Activated naive CD4-positive, alpha-beta T cell treated with anti-CD3 and anti-CD28 coated beads for 36 hours (primary cell): ENCODE measurements at regions of chr21 and their contacts with region 1.

Region 1: DNA sequence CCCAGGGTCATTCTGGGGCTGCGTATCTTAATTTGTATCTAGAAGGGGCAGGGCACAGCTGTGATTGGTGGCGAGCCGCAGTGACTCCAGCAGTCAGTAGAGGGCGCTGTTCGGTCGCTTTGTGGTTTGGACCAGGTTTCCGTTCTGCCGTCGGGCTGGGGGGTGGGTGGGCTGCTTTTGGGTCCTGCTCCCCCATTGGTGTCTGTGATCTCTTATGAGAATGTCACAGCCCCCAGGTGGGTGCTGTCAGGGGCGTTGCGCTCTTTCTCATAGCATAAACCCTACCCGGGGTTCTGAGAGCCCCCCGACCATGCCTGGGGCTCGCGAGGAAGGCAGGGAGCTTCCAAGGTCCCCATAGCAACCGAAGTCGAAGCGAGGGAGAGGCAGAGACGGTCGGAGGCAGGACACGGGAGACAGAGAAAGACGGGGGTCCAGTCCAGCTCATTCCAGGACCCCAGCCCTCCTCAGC is 5.4 kb downstream of the TFF3 start:
- DNase-seq: peak; percentile 86
- H3K4me3 Mint-ChIP-seq: no peak overlapping the region
- H3K27ac Mint-ChIP-seq: no peak overlapping the region
- H3K4me1 Mint-ChIP-seq: peaks cover 3% of the 10 kb centered on the region
- H3K27me3 Mint-ChIP-seq: peaks cover 2% of the 10 kb centered on the region

Region 2: DNA sequence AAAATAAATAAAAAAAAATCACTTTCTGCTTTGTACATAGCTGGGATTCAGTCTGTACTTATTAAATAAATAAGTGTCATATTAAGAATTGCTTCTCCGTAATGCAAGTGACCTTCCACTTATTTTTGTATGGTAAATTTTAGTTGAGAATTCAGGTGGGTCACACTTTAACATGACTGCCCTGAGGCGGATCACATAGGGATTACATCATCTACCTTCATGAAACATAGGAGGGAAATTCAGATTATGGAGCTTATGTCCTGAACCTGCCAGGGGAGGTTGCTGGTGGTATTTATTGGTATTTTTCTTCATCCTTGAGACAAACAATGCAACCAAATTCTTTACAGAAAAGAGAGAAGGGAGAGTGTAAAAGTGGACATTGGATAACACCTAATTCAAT is 1527.0 kb before region 1 on chr21:
- CTCF ChIA-PET with region 1: no interaction called
- intact Hi-C with region 1: no loop called
- DNase-seq: no peak
- H3K4me3 Mint-ChIP-seq: no peak overlapping the region
- H3K27ac Mint-ChIP-seq: no peak overlapping the region
- H3K4me1 Mint-ChIP-seq: no peaks in the 10 kb centered on the region
- H3K27me3 Mint-ChIP-seq: peaks cover 2% of the 10 kb centered on the region

Region 3: DNA sequence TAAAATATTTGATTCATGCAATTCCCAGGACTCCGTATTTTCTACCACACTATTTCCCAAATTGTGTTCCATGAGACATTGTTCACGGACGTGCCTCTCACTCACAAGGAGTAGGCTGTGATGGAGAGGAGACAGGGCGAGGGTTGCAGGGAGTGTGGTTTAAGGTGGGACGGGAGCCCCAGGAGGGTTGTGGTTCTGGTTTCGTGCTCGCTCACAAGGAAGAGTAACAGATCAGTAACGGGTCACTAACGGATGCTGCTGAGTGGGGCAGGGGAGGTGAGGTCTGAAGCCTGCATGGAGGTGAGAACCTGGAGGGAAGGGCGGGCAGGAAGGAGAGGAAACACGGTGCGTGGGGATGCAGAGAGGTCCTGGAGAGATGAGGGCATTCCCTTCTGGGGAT is 23.4 kb before region 1 on chr21:
- CTCF ChIA-PET with region 1: no interaction called
- intact Hi-C with region 1: no loop called
- DNase-seq: no peak
- H3K4me3 Mint-ChIP-seq: no peak overlapping the region
- H3K27ac Mint-ChIP-seq: no peak overlapping the region
- H3K4me1 Mint-ChIP-seq: no peaks in the 10 kb centered on the region
- H3K27me3 Mint-ChIP-seq: no peaks in the 10 kb centered on the region

Region 4: GRCh38 chr21:42319851-42320572 is 10.2 kb after region 1 on chr21:
- CTCF ChIA-PET with region 1: no interaction called
- intact Hi-C with region 1: no loop called
- DNase-seq: no peak
- H3K4me3 Mint-ChIP-seq: no peak overlapping the region
- H3K27ac Mint-ChIP-seq: no peak overlapping the region
- H3K4me1 Mint-ChIP-seq: peaks cover 2% of the 10 kb centered on the region
- H3K27me3 Mint-ChIP-seq: peaks cover 3% of the 10 kb centered on the region

Region 5: GRCh38 chr21:42449296-42449927 is 139.6 kb after region 1 on chr21:
- CTCF ChIA-PET with region 1: interaction called, 18 read pairs
- intact Hi-C with region 1: loop called (anchors 1 kb)
- DNase-seq: no peak
- H3K4me3 Mint-ChIP-seq: no peak overlapping the region
- H3K27ac Mint-ChIP-seq: peak overlapping the region; percentile 86
- H3K4me1 Mint-ChIP-seq: peaks cover 34% of the 10 kb centered on the region
- H3K27me3 Mint-ChIP-seq: no peaks in the 10 kb centered on the region

Region 6: DNA sequence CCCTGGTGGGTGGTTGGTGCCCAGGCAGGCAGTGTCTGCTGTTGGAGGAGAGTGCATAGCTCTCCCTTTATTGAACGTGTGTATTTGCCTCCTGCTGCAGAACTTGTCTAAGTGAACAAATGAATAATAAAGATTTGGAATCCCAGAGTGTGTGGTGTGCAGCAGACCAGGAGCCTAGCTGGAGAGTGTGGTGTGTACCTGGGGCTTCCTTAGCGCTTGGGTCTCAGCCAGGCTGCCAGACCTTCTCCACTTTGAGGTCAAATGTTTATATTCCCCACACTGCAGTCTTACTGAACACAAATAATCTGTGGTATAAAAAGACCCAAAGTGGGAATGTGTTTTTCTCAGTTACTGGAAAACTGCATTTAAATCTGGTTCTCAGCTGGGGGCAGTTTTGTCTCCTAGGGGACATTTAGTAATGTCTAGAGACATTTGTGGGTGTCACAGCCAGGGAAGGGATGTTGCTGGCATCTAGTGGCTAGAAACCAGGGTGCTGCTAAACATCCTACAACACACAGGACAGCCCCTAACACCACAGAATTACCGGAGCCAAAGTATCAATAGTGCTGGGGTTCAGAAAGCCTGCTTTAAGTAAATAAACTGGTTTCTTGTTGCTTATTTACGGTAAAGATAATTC is 227.4 kb after region 1 on chr21:
- CTCF ChIA-PET with region 1: interaction called, 12 read pairs
- intact Hi-C with region 1: no loop called
- DNase-seq: peak; percentile 54
- H3K4me3 Mint-ChIP-seq: no peak overlapping the region
- H3K27ac Mint-ChIP-seq: no peak overlapping the region
- H3K4me1 Mint-ChIP-seq: peaks cover 16% of the 10 kb centered on the region
- H3K27me3 Mint-ChIP-seq: no peaks in the 10 kb centered on the region